GM12878 (cell line): ENCODE measurements at regions of chr9 and their contacts with region 1.

Region 1: GRCh38 chr9:32571969-32572899 is 725 bp downstream of the NDUFB6 start:
- DNase-seq: peak; percentile 59
- ATAC-seq: peak; percentile 96
- H3K4me3 ChIP-seq: peak overlapping the region; percentile 85
- H3K27ac ChIP-seq: peak overlapping the region; percentile 78
- H3K4me1 ChIP-seq: no peaks in the 10 kb centered on the region; the same call in 1 of the 2 replicates
- H3K27me3 ChIP-seq: no peaks in the 10 kb centered on the region
- CTCF ChIP-seq: peak; percentile 78 to 85 (median 80)
- EP300 ChIP-seq: no peak
- POLR2A ChIP-seq: no peak
- RAD21 ChIP-seq: peak; percentile 74

Region 2: GRCh38 chr9:32384364-32385151 is 187.7 kb before region 1 on chr9 and contains the start of gene ACO1:
- CTCF ChIA-PET with region 1: interaction called, 597 read pairs
- POLR2A ChIA-PET with region 1: interaction called, 12 read pairs
- RAD21 ChIA-PET with region 1: interaction called, 368 read pairs
- SMC1A ChIA-PET with region 1: interaction called, 285 read pairs
- in situ Hi-C with region 1: loop called (anchors 5 kb)
- intact Hi-C with region 1: loop called (anchors 1 kb)
- DNase-seq: peak; percentile 28
- ATAC-seq: peak; percentile 99
- H3K4me3 ChIP-seq: peak within 1 kb of the TSS; percentile 69
- H3K27ac ChIP-seq: no peak within 1 kb of the TSS
- H3K4me1 ChIP-seq: 0 out of 2 replicates have a peak, but pooled peaks cover 3% of the 10 kb centered on the region
- H3K27me3 ChIP-seq: no peaks in the 10 kb centered on the region; a peak in 2 of 4 replicates
- CTCF ChIP-seq: peak in 1 of 3 experiments; percentile 24; a peak in 1 of 6 replicates
- EP300 ChIP-seq: no peak
- POLR2A ChIP-seq: peak; percentile 82
- RAD21 ChIP-seq: no peak
- polyA plus RNA-seq, gene ACO1: 0.21 to 0.53 TPM

Region 3: GRCh38 chr9:32431940-32432555 is 140.2 kb before region 1 on chr9:
- CTCF ChIA-PET with region 1: interaction called, 6 read pairs
- POLR2A ChIA-PET with region 1: no interaction called
- RAD21 ChIA-PET with region 1: interaction called, 3 read pairs
- SMC1A ChIA-PET with region 1: interaction called, 5 read pairs
- in situ Hi-C with region 1: no loop called
- intact Hi-C with region 1: loop called (anchors 5 kb)
- DNase-seq: no peak
- ATAC-seq: peak; percentile 72
- H3K4me3 ChIP-seq: no peak overlapping the region
- H3K27ac ChIP-seq: no peak overlapping the region
- H3K4me1 ChIP-seq: no peaks in the 10 kb centered on the region
- H3K27me3 ChIP-seq: no peaks in the 10 kb centered on the region
- CTCF ChIP-seq: peak; percentile 33 to 46 (median 39); a peak in 5 of 6 replicates
- EP300 ChIP-seq: no peak
- POLR2A ChIP-seq: no peak
- RAD21 ChIP-seq: peak; percentile 29; the same call in 1 of the 2 replicates

Region 4: DNA sequence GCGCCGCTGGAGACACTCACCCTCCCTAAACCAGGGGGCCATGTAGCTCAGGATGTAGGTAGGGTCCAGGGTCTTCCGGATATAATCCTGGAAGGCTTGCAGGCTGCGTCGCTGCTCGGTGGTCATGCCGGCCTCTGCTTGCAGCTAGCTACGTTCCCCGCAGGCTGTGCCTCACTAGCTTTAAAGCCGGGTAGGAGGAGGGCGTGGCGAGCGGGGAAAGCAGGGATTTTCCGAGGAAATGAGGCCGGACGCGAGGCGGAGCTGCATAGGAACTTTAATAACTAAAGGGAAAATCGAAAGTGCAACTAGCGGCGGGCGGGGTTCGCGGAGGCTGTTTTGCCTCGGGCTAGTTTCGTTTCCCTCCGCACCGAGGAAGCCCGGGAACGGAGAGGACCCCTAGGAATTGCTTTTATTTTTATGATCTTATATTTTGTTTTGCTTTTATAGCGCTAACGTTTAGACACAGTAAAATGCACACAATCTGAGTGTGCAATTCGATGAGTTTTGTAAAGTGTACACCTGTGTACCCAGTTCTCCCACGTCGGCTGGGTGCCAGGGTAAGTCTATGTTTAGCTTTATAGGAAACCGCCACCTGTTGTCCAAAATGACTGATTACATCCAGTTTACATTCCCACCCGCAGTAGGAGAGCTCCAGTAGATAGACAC is 46.1 kb before region 1 on chr9 and contains the start of gene RIGI:
- CTCF ChIA-PET with region 1: interaction called, 25 read pairs
- POLR2A ChIA-PET with region 1: no interaction called
- RAD21 ChIA-PET with region 1: interaction called, 29 read pairs
- SMC1A ChIA-PET with region 1: interaction called, 16 read pairs
- in situ Hi-C with region 1: no loop called
- intact Hi-C with region 1: loop called (anchors 2 kb)
- DNase-seq: peak; percentile 51
- ATAC-seq: peak; percentile 76
- H3K4me3 ChIP-seq: peak within 1 kb of the TSS; percentile 98
- H3K27ac ChIP-seq: peak within 1 kb of the TSS; percentile 84
- H3K4me1 ChIP-seq: no peaks in the 10 kb centered on the region; the same call in 1 of the 2 replicates
- H3K27me3 ChIP-seq: no peaks in the 10 kb centered on the region
- CTCF ChIP-seq: peak; percentile 24 to 39 (median 34); a peak in 5 of 6 replicates
- EP300 ChIP-seq: no peak
- POLR2A ChIP-seq: peak; percentile 62
- RAD21 ChIP-seq: peak; percentile 21; the same call in 1 of the 2 replicates
- polyA plus RNA-seq, gene RIGI: 6.3 to 7.2 TPM

Region 5: DNA sequence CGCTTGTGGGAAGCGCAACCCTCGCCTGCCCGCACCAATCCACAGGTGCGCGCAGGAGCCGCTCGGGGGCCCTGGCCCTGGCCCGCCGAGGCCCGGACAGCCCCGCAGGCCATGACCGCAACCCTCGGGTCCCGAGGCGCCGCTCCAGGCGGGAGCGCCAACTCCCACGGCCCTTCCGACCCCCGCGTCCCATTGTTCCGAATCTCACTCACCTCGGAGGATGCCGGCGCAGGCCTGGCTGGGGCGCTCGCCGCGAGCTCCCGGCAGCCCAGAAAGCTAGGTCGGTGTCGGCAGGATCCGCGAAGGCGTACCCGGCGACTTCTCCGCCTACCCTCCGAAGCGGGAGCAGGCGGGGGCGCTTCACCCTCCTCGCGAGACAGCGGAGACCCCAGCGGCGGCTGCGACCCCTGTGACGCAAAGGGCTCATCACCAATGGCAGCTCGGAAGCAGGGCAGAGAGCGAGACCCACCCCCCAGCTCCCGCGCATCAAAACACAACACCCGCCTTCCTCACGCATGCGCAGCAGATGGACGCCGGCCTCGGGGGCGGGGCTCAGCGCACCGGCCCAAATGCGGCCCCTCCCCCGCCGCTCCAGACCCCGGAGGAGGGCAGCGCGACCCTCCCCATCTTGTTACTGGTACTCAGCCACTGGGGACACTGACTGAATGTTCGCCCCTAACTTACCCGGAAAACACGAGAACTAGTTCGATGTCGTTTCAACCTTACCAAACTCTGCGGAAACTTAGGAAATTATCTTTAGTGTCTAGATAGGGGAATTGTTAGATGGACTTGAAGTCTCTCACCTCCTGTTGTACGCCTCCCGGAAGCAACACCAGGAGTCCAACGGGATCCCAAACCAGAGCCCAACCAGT is 21.4 kb before region 1 on chr9:
- CTCF ChIA-PET with region 1: interaction called, 48 read pairs
- POLR2A ChIA-PET with region 1: interaction called, 8 read pairs
- RAD21 ChIA-PET with region 1: interaction called, 51 read pairs
- SMC1A ChIA-PET with region 1: interaction called, 11 read pairs
- in situ Hi-C with region 1: no loop called
- intact Hi-C with region 1: loop called (anchors 1 kb)
- DNase-seq: peak; percentile 64
- ATAC-seq: peak; percentile 79
- H3K4me3 ChIP-seq: peak overlapping the region; percentile 83
- H3K27ac ChIP-seq: peak overlapping the region; percentile 96
- H3K4me1 ChIP-seq: peaks cover 8% of the 10 kb centered on the region
- H3K27me3 ChIP-seq: no peaks in the 10 kb centered on the region
- CTCF ChIP-seq: 0 out of 6 replicates have a peak, but pooled peaks of 2 of the 3 experiments have one; percentile 16
- EP300 ChIP-seq: no peak
- POLR2A ChIP-seq: peak; percentile 75
- RAD21 ChIP-seq: no peak

Region 6: GRCh38 chr9:32589083-32589723 is 17.0 kb after region 1 on chr9:
- CTCF ChIA-PET with region 1: interaction called, 28 read pairs
- POLR2A ChIA-PET with region 1: no interaction called
- RAD21 ChIA-PET with region 1: interaction called, 3 read pairs
- SMC1A ChIA-PET with region 1: interaction called, 3 read pairs
- in situ Hi-C with region 1: no loop called
- intact Hi-C with region 1: no loop called
- DNase-seq: no peak
- ATAC-seq: peak; percentile 88
- H3K4me3 ChIP-seq: no peak overlapping the region
- H3K27ac ChIP-seq: no peak overlapping the region
- H3K4me1 ChIP-seq: no peaks in the 10 kb centered on the region
- H3K27me3 ChIP-seq: no peaks in the 10 kb centered on the region
- CTCF ChIP-seq: peak; percentile 39 to 56 (median 56); a peak in 5 of 6 replicates
- EP300 ChIP-seq: no peak
- POLR2A ChIP-seq: no peak
- RAD21 ChIP-seq: peak; percentile 65